ENCODE measurements at regions of chr5 and their contacts with region 1.

Region 1: DNA sequence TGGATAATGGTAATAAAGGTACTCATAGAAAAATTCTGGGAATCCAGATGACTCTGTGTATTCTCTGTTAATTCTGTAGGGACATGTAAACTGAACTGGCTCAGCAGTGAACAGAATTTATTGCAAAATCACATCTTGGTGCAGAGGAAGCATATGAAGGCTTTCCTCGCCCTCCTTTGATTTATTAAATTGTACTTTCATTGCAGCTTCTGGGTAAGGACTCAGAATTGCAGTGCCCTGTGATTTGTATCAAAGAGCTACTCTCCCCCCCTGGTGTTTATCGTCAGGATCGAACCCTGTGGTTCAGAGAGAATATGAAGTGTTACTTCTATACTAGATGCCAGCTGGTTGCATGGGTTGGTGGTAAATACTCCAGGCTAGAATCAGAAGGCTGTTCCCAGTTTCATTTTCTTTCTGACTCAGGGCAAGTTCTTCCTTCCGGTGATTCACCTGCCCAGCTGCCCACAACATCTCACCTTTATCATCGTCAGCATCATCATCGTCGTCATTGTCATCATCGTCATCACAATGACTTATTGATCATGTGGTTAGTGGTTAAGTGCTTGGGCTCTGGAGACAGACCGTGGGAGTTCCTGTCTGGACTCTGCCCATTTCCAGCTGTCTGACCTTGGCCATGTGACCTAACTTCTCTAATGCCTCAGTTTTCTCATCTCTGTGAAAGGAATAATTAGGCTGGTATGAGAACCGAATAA is 238.8 kb downstream of the ARHGAP26 start:
- DNase-seq: peak; percentile 82
- H3K4me3 Mint-ChIP-seq: peak overlapping the region; percentile 24
- H3K27ac Mint-ChIP-seq: peak overlapping the region; percentile 86
- H3K4me1 Mint-ChIP-seq: peaks cover 79% of the 10 kb centered on the region
- H3K27me3 Mint-ChIP-seq: no peaks in the 10 kb centered on the region

Region 2: DNA sequence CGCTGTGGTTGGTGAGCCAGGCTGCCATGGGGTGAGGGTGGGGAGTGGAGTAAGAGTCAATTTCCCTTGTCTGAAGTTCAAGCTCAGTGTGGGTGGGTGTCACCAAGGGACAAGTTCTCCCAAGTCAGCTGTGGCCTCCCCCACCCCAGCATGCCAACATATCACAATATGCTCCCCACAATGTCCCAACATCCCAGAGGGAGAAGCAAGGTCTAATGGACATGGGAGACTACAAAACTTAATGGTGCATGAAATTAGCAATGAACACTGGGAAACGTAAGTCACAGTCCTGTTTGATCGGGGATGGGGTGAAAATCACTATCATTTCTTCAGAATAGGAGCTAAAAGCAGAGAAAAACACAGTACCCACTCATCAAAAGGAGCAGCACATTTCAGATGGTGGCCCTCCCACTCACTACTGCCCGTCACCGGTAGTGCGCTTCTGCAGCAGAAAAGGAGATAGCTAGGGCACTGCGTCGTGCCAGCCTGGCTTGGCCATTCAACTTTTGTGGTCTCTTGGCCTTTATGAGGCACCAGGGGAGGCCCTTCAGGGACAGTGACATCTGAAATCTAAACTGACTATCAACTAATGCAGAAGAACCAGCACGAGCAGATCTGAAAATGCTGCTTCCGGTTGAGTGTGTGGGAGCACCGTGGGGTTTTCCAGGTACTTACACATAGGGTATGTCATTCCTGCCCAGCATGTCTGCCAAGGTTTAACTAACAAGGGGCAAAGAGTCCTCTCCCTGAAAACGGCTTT is 920.9 kb before region 1 on chr5:
- intact Hi-C with region 1: no loop called
- DNase-seq: no peak
- H3K4me3 Mint-ChIP-seq: peak overlapping the region; percentile 51
- H3K27ac Mint-ChIP-seq: peak overlapping the region; percentile 85
- H3K4me1 Mint-ChIP-seq: peaks cover 52% of the 10 kb centered on the region
- H3K27me3 Mint-ChIP-seq: no peaks in the 10 kb centered on the region

Region 3: GRCh38 chr5:142922223-142922952 is 86.6 kb before region 1 on chr5:
- intact Hi-C with region 1: loop called (anchors 1 kb)
- DNase-seq: no peak
- H3K4me3 Mint-ChIP-seq: no peak overlapping the region
- H3K27ac Mint-ChIP-seq: no peak overlapping the region
- H3K4me1 Mint-ChIP-seq: peaks cover 49% of the 10 kb centered on the region
- H3K27me3 Mint-ChIP-seq: no peaks in the 10 kb centered on the region

Region 4: GRCh38 chr5:143023411-143024096 is 14.6 kb after region 1 on chr5:
- intact Hi-C with region 1: loop called (anchors 1 kb)
- DNase-seq: peak; percentile 50
- H3K4me3 Mint-ChIP-seq: peak overlapping the region; percentile 4
- H3K27ac Mint-ChIP-seq: peak overlapping the region; percentile 45
- H3K4me1 Mint-ChIP-seq: peaks cover 67% of the 10 kb centered on the region
- H3K27me3 Mint-ChIP-seq: peaks cover 4% of the 10 kb centered on the region

Region 5: GRCh38 chr5:143037071-143037470 is 28.1 kb after region 1 on chr5:
- intact Hi-C with region 1: loop called (anchors 1 kb)
- DNase-seq: no peak
- H3K4me3 Mint-ChIP-seq: no peak overlapping the region
- H3K27ac Mint-ChIP-seq: peak overlapping the region; percentile 83
- H3K4me1 Mint-ChIP-seq: peaks cover 65% of the 10 kb centered on the region
- H3K27me3 Mint-ChIP-seq: no peaks in the 10 kb centered on the region

Region 6: DNA sequence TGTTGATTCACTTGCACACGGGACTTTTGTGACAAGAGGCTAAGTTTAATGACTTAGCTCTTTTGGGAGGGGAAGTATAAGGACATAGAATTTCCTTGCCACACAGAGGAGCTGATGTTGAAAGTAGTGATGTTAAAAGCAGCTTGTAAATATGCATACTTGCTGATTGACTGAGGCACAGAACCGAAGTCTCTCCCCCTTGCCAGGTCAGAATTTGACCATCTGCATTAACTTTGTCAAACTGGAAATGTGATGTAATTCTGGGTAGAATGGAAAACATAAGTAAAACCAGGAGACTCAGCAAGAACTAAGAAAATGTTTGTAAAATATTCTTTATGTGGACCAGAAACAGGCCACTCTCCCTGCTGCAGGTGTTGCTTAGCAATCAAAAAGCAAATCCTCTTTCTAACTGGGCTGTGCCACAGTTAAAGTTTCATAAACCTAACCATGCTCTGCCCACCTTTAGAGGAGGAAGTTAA is 110.4 kb after region 1 on chr5:
- intact Hi-C with region 1: loop called (anchors 1 kb)
- DNase-seq: no peak
- H3K4me3 Mint-ChIP-seq: no peak overlapping the region
- H3K27ac Mint-ChIP-seq: peak overlapping the region; percentile 79
- H3K4me1 Mint-ChIP-seq: peaks cover 60% of the 10 kb centered on the region
- H3K27me3 Mint-ChIP-seq: peaks cover 1% of the 10 kb centered on the region

Region 7: DNA sequence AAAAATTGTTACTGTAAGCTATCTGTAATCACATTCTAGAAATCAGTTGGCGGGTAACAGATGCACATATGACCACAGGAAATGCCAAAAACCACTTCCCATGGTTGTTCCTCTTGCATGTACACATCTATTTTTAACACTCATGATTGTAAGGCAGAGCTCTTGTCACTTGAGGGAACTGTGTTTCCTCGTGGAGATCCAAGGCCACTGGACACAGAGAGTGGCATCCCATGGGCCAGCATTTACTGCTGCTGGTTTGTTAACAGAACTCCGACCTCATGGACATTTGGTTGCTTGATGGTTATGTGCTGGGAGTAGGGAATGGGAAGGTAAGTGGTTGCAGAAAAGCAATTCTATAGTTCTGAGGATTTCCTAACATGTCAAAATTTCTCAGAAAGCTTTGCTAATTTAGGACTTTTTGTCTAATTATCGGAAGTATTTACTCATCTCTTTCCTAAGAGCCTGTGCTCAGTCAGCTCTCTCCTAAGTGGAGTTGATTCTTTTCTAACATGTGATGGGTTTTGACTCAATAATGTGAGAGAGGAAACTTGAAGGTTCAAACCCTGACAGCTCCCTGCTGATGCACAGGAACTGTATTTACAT is 596.5 kb after region 1 on chr5:
- intact Hi-C with region 1: loop called (anchors 5 kb)
- DNase-seq: peak; percentile 25
- H3K4me3 Mint-ChIP-seq: peak overlapping the region; percentile 56
- H3K27ac Mint-ChIP-seq: peak overlapping the region; percentile 91
- H3K4me1 Mint-ChIP-seq: peaks cover 38% of the 10 kb centered on the region
- H3K27me3 Mint-ChIP-seq: no peaks in the 10 kb centered on the region

Measured in activated T-helper 1 cell treated with anti-CD3 and anti-CD28 coated beads, Interleukin-12 subunit alpha, Interleukin-12 subunit beta, Interleukin-2, Interleukin-4 antibody, amounts not matched to agents 30 ng/mL and 10 ng/mL and 1 ng/mL, durations not matched to agents 14 hours and 24 hours and 36 hours (primary cell).